B cell (primary cell): ENCODE measurements at regions of chr11 and their contacts with region 1.

Region 1: DNA sequence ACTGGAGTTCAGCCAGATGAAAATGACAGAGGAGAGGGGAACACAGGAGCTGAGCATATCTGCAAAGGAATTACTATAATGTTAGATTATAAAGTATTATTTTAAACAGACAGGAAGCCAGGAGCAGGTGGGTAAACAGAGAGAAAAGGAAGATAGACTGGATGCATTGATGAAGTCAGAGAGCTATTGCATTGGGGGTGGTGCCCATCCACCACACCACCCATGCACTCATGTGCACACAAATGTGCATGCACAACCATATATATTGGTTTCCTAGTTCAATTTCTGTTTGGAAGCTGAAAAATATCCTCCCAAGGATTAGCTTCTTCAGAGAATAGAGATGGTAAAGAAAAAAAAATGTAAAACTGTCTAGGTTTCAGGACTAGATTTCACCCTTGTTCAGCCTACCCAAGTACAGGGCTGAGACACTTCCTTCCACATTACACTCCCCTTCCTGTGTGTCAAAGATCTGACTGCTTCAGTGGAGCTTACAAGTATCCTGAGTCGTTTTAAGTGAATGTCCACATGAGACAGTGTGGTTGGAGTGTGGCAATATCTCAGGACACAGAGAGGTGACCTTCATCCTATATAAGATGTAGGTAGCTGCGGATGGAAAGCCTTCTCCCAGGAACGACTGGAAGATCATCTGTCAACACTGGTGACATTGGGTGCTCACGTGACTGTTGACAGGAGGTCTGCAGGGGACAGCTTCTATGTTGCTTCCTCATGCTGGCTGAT is 12.2 kb upstream of the SMPD1 start:
- DNase-seq: peak; percentile 61
- ATAC-seq: peak; percentile 57
- H3K4me3 ChIP-seq: peak overlapping the region in 3 of 5 experiments; percentile 0 to 27 (median 21)
- H3K4me3 Mint-ChIP-seq: peak overlapping the region; percentile 68
- H3K27ac ChIP-seq: peak overlapping the region; percentile 66 to 73
- H3K27ac Mint-ChIP-seq: peak overlapping the region; percentile 88
- H3K4me1 ChIP-seq: peaks cover 16 to 17% of the 10 kb centered on the region in 2 donors
- H3K4me1 Mint-ChIP-seq: peaks cover 20% of the 10 kb centered on the region
- H3K27me3 ChIP-seq: no peaks in the 10 kb centered on the region
- H3K27me3 Mint-ChIP-seq: no peaks in the 10 kb centered on the region
- CTCF ChIP-seq: no peak

Region 2: DNA sequence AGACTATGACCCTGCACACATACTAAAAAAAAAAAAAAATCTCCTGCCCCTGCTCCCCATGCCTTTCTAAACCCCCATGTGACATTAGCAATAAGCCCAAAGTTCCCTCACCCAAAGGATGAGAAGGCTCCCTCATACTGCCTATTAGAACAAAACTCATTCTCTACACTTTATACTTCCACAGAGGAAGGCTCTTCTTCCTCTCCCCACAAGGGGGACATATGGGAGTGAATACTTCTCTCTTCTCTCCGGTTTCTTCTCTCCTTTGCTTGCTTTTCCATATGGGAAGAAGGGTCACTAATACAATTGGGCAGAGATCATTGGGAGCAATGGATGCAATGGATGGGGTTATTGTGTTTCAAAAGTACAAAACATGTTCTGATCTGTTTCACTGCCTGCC is 394.6 kb before region 1 on chr11:
- CTCF ChIA-PET with region 1: no interaction called
- POLR2A ChIA-PET with region 1: no interaction called
- intact Hi-C with region 1: no loop called
- DNase-seq: no peak
- ATAC-seq: no peak
- H3K4me3 ChIP-seq: no peak overlapping the region
- H3K4me3 Mint-ChIP-seq: no peak overlapping the region
- H3K27ac ChIP-seq: no peak overlapping the region
- H3K27ac Mint-ChIP-seq: no peak overlapping the region
- H3K4me1 ChIP-seq: no peaks in the 10 kb centered on the region
- H3K4me1 Mint-ChIP-seq: no peaks in the 10 kb centered on the region
- H3K27me3 ChIP-seq: no peaks in the 10 kb centered on the region
- H3K27me3 Mint-ChIP-seq: peaks cover 17% of the 10 kb centered on the region
- CTCF ChIP-seq: no peak

Region 3: DNA sequence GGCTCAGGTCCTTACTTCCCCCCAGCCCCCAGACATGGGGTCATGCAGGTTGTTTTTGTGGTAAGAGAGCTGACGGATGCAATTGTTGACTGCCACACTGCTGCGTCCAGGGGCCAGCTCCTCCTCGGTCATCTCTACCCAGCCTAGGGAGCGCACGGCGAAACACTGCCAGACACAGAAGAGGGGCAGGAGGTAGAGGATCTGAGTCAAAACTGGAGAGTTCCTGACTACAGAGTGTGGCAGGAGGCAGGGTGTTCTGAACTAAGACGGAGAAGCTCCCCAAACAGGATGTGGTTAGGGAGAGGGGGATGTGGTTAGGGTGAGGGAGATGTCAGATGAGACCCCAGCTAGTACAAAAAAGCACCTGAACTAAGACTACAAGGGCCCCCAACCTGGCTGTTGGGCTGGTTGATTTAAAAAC is 24.5 kb after region 1 on chr11:
- CTCF ChIA-PET with region 1: interaction called, 49 read pairs
- POLR2A ChIA-PET with region 1: no interaction called
- intact Hi-C with region 1: no loop called
- DNase-seq: peak; percentile 81
- ATAC-seq: peak; percentile 83
- H3K4me3 ChIP-seq: peak overlapping the region in 4 of 5 experiments; percentile 10 to 51 (median 34)
- H3K4me3 Mint-ChIP-seq: peak overlapping the region; percentile 80
- H3K27ac ChIP-seq: peak overlapping the region; percentile 60 to 62
- H3K27ac Mint-ChIP-seq: peak overlapping the region; percentile 90
- H3K4me1 ChIP-seq: peaks cover 39 to 43% of the 10 kb centered on the region in 2 donors
- H3K4me1 Mint-ChIP-seq: peaks cover 59% of the 10 kb centered on the region
- H3K27me3 ChIP-seq: no peaks in the 10 kb centered on the region
- H3K27me3 Mint-ChIP-seq: no peaks in the 10 kb centered on the region
- CTCF ChIP-seq: no peak

Region 4: DNA sequence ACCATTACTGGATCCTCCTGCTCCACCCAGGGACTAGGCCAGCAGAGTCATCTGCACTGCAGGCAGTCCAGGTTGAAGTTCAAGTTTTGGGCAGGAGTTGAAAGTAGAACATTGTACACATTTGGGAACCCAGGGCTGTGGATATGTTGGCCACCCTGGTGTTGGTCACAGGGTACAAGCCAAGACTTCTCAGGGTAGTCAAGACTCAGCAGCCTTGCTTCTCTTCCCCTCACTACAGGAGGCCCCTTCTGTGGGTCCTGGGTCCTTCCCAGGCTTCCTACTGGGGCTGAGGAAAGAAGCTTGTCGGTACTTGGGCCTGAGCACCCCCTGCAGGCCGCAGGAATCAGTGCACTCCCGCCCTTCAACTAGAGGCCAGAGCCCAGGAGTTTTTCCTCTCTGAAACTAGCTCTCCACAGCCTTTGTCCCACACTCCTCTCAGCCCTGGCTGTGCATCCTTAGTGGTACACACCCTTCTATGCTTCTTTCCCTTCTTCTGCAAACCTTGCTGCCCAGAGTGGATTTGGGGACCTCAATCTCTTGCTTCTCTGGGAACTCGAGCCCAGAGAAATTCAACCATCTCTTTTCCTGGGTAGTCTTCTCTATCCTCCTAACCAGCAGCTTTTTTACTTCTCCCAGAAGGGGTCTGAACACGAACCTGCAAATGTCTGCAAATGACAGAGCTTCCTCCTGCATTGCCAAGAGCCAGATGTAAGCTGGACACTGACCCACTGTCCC is 65.4 kb after region 1 on chr11:
- CTCF ChIA-PET with region 1: interaction called, 536 read pairs
- POLR2A ChIA-PET with region 1: interaction called, 4 read pairs
- intact Hi-C with region 1: loop called (anchors 1 kb)
- DNase-seq: peak; percentile 72
- ATAC-seq: peak; percentile 92
- H3K4me3 ChIP-seq: no peak overlapping the region
- H3K4me3 Mint-ChIP-seq: no peak overlapping the region
- H3K27ac ChIP-seq: no peak overlapping the region
- H3K27ac Mint-ChIP-seq: no peak overlapping the region
- H3K4me1 ChIP-seq: peaks cover 0 to 4% of the 10 kb centered on the region in 2 donors
- H3K4me1 Mint-ChIP-seq: no peaks in the 10 kb centered on the region
- H3K27me3 ChIP-seq: no peaks in the 10 kb centered on the region
- H3K27me3 Mint-ChIP-seq: no peaks in the 10 kb centered on the region
- CTCF ChIP-seq: peak; percentile 92

Region 5: GRCh38 chr11:6497069-6497839 is 119.2 kb after region 1 on chr11 and contains the start of gene DNHD1:
- CTCF ChIA-PET with region 1: interaction called, 28 read pairs
- POLR2A ChIA-PET with region 1: no interaction called
- intact Hi-C with region 1: no loop called
- DNase-seq: no peak
- ATAC-seq: no peak
- H3K4me3 ChIP-seq: no peak within 1 kb of the TSS
- H3K4me3 Mint-ChIP-seq: no peak within 1 kb of the TSS
- H3K27ac ChIP-seq: no peak within 1 kb of the TSS
- H3K27ac Mint-ChIP-seq: no peak within 1 kb of the TSS
- H3K4me1 ChIP-seq: no peaks in the 10 kb centered on the region
- H3K4me1 Mint-ChIP-seq: no peaks in the 10 kb centered on the region
- H3K27me3 ChIP-seq: no peaks in the 10 kb centered on the region
- H3K27me3 Mint-ChIP-seq: no peaks in the 10 kb centered on the region
- CTCF ChIP-seq: no peak
- total RNA-seq, gene DNHD1: 58.2 and 59.6 TPM in 2 replicates

Region 6: DNA sequence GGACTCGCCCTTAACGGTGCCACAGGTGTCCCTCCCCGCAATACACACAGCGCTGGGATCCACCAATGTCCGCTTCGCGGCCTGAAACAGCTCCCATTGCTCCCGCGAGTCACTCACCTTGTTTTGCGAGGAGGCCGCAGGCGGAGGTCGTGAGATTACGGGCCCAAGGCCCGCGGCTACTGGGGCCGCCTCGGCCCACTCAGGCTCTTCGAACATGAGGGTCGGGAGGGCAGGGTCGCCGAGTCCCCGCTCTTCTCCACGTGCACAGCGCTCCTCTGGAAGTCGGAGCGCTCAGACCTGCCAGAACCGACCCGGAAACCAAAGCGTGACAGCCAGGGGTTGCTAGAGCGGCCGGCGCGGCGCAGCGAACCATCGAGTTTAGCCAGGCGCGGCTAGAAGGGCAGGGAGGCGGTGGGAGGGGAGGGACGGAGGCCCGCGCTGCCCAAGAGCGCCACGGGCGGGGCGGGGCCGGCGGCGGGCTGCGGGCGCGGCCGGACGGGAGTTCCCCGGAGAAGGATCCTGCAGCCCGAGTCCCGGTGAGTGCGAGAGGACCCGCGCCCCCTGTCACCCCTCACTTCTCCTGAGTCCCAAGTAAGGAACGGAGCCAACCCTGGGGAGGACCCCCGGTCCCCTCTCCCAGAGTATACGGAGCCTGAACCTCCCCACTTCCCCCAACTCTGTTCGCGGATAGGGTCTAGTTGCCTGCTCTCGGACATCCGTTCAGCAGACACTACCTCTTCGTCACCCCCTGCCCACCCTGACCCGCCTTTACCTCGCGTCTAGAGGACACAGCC is 225.4 kb after region 1 on chr11 and contains the starts of genes ILK and RRP8:
- CTCF ChIA-PET with region 1: interaction called, 4 read pairs
- POLR2A ChIA-PET with region 1: no interaction called
- intact Hi-C with region 1: loop called (anchors 5 kb)
- DNase-seq: peak; percentile 91
- ATAC-seq: peak; percentile 92
- H3K4me3 ChIP-seq: peak within 1 kb of the TSS; percentile 77 to 96 (median 93)
- H3K4me3 Mint-ChIP-seq: no peak within 1 kb of the TSS
- H3K27ac ChIP-seq: peak within 1 kb of the TSS; percentile 70 to 89
- H3K27ac Mint-ChIP-seq: no peak within 1 kb of the TSS
- H3K4me1 ChIP-seq: peaks cover 51 to 56% of the 10 kb centered on the region in 2 donors
- H3K4me1 Mint-ChIP-seq: peaks cover 42% of the 10 kb centered on the region
- H3K27me3 ChIP-seq: no peaks in the 10 kb centered on the region
- H3K27me3 Mint-ChIP-seq: no peaks in the 10 kb centered on the region
- CTCF ChIP-seq: peak; percentile 8
- total RNA-seq, gene ILK: 119 and 131 TPM in 2 replicates
- total RNA-seq, gene RRP8: 29.4 and 29.5 TPM in 2 replicates

Region 7: DNA sequence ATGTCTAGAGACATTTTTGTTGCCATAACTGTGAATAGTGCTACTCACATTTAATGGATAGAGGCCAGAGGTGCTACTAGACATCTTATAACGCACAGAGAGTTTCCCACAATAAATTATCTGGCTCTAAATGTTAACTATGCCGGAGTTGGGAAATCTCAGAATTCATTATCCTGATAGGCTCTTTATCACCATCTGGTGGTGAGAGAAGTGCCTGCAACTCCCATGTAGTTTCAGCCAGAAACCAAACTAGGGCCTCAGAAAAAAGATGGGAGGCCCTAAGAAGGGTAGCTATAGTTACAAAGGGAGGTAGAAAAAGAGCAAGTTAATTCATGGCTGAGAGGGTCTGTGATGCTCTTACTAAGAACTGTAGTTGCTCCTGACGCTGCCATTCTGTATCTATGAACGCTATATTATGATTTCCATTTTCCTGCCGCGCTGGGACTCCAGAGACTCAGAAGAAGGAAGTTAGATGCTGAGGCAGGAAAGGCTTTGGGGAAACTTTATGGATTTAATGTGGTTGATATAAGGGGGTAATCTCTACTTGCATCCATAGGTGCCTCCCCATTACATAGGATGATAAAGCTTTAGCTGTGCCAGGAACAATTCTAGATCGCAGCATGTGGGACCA is 327.9 kb after region 1 on chr11:
- CTCF ChIA-PET with region 1: interaction called, 52 read pairs
- POLR2A ChIA-PET with region 1: no interaction called
- intact Hi-C with region 1: loop called (anchors 2 kb)
- DNase-seq: peak; percentile 62
- ATAC-seq: peak; percentile 78
- H3K4me3 ChIP-seq: no peak overlapping the region
- H3K4me3 Mint-ChIP-seq: no peak overlapping the region
- H3K27ac ChIP-seq: peak overlapping the region in 1 of 2 donors; percentile 35
- H3K27ac Mint-ChIP-seq: peak overlapping the region; percentile 60
- H3K4me1 ChIP-seq: peaks cover 0 to 4% of the 10 kb centered on the region in 2 donors
- H3K4me1 Mint-ChIP-seq: peaks cover 21% of the 10 kb centered on the region
- H3K27me3 ChIP-seq: no peaks in the 10 kb centered on the region
- H3K27me3 Mint-ChIP-seq: no peaks in the 10 kb centered on the region
- CTCF ChIP-seq: peak; percentile 95